ENCODE measurements at regions of chr1 and their contacts with region 1.

Region 1: DNA sequence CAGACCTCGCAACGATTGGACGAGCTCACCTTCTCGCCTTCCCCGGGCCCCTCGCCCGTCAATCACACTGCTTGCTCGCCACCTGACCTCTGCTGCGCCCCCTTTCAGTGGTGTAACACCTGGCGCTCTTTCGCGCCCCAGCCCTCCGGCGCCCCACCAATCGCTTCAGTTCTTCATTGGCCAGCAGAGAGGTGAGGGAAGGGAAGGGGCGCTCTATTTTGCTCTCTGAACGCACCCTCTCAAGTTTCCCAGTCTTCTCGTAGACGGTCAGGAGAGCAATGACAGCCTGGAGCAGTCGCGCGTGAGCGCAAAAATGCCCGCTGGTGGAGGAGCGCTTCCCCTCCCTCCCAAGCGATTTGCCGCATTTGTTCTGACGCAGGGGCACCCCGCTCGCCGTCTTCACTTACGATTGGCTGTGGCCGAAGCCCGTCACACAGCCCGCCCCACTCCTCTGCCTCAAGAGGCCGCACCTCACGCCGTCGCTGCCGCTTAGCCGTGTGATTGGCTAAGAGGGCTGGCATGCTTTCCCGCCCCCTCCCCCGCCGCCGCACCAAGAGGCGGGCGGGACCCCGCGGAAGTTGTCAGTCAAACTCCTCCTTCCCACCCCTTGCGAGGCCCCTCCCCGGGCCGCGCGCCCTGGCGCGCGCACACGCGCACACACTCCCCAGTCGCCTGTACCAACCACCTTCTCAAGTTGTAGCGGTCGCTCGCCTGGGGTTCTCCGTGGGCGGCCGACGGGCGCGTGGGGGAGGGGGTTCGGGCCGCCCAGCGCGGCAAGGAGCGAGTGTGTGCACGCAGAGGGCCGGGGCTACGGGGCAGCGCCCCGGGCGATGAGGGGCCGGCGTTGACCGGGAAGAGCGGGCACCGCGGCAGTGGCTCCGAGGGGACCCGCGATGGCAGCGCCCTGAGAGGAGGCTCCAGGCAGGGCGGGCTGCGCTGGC is at the start of gene PPP2R5A:
- DNase-seq: peak; percentile 99
- H3K4me3 Mint-ChIP-seq: peak within 1 kb of the TSS; percentile 96
- H3K27ac Mint-ChIP-seq: peak within 1 kb of the TSS; percentile 91
- H3K4me1 Mint-ChIP-seq: peaks cover 32% of the 10 kb centered on the region
- H3K27me3 Mint-ChIP-seq: no peaks in the 10 kb centered on the region
- total RNA-seq, gene PPP2R5A: 30.6 to 31.4 TPM

Region 2: GRCh38 chr1:211323156-211324063 is 961.6 kb before region 1 on chr1:
- CTCF ChIA-PET with region 1: no interaction called
- intact Hi-C with region 1: loop called (anchors 5 kb)
- DNase-seq: peak; percentile 85
- H3K4me3 Mint-ChIP-seq: no peak overlapping the region
- H3K27ac Mint-ChIP-seq: no peak overlapping the region
- H3K4me1 Mint-ChIP-seq: peaks cover 58% of the 10 kb centered on the region
- H3K27me3 Mint-ChIP-seq: no peaks in the 10 kb centered on the region

Region 3: DNA sequence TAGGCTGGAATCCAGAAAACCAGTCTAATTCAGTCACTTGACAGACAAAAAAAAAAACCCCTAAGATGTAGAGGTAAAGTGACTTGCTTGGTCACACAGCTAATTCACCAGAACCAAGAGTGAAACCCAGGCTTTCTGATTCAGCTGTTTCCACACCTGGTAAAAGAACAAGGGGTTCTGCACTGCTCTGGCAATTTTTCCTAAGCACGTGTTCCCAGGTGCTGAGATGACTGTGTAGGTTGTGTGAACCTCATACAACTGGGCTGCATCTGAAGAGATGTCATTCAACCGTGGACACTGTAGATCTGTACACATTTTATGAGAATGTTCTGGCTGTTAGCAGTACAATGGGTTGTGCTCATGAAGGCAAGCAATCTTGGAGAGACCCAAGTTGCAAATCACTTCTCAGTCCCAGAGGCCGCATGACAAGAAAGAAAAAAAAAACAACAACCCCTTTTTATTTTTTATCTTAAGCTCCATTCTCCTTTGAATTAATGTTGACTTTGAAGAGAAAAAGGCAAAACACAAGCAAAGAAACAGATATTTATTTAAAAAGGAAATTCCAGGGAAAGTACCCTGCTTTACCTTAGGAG is 345.0 kb before region 1 on chr1:
- CTCF ChIA-PET with region 1: no interaction called
- intact Hi-C with region 1: loop called (anchors 1 kb)
- DNase-seq: peak; percentile 86
- H3K4me3 Mint-ChIP-seq: no peak overlapping the region
- H3K27ac Mint-ChIP-seq: no peak overlapping the region
- H3K4me1 Mint-ChIP-seq: peaks cover 44% of the 10 kb centered on the region
- H3K27me3 Mint-ChIP-seq: no peaks in the 10 kb centered on the region

Region 4: DNA sequence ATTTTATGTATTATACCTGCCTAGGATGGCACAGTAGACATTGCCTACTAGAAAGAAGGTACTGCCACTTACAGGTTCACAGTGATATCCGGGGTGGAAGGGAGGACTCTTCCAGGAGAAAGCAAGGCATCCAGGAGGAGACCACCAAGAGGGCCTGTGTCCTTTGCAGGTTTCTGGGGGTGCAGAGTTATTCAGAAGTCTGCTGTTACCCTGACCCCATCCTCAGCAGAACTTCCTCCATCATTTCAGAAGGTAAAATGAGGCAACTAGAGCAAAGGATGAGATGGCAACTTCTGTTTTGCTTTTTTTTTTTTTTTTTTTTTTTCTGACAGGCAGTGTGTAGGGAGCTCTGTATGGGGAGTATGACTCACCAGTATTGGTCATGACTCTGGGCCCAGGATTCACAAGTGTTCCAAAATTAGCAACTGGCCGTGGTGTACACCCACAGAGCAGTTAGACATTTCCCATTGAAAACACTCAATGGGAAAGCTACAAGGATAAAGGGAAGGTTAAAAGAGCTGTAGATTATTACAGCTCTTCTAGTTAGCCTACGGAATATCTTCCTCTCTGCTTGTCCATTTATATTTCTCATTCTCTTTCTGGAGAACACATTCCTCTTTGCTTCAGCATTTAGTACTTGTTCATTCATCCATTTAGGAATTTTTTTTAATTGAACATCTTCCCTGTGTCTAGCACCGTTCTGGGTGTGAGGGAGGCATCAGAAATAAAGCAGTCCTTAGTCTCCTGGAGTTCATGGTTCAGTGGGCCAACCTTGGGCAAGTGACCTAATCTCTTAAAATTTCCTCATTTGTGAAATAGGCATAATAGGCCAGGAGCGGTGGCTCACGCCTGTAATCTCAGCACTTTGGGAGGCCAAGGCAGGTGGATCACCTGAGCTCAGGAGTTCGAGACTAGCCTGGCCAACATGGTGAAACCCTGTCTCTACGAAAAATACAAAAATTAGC is 50.3 kb before region 1 on chr1:
- CTCF ChIA-PET with region 1: no interaction called
- intact Hi-C with region 1: loop called (anchors 2 kb)
- DNase-seq: peak; percentile 60
- H3K4me3 Mint-ChIP-seq: no peak overlapping the region
- H3K27ac Mint-ChIP-seq: peak overlapping the region; percentile 19
- H3K4me1 Mint-ChIP-seq: peaks cover 14% of the 10 kb centered on the region
- H3K27me3 Mint-ChIP-seq: peaks cover 4% of the 10 kb centered on the region

Region 5: GRCh38 chr1:212414328-212415106 is 129.5 kb after region 1 on chr1 and contains the start of gene PACC1:
- CTCF ChIA-PET with region 1: no interaction called
- intact Hi-C with region 1: loop called (anchors 1 kb)
- DNase-seq: peak; percentile 88
- H3K4me3 Mint-ChIP-seq: peak within 1 kb of the TSS; percentile 95
- H3K27ac Mint-ChIP-seq: peak within 1 kb of the TSS; percentile 72
- H3K4me1 Mint-ChIP-seq: peaks cover 23% of the 10 kb centered on the region
- H3K27me3 Mint-ChIP-seq: no peaks in the 10 kb centered on the region
- total RNA-seq, gene PACC1: 9.5 to 10.2 TPM

Region 6: DNA sequence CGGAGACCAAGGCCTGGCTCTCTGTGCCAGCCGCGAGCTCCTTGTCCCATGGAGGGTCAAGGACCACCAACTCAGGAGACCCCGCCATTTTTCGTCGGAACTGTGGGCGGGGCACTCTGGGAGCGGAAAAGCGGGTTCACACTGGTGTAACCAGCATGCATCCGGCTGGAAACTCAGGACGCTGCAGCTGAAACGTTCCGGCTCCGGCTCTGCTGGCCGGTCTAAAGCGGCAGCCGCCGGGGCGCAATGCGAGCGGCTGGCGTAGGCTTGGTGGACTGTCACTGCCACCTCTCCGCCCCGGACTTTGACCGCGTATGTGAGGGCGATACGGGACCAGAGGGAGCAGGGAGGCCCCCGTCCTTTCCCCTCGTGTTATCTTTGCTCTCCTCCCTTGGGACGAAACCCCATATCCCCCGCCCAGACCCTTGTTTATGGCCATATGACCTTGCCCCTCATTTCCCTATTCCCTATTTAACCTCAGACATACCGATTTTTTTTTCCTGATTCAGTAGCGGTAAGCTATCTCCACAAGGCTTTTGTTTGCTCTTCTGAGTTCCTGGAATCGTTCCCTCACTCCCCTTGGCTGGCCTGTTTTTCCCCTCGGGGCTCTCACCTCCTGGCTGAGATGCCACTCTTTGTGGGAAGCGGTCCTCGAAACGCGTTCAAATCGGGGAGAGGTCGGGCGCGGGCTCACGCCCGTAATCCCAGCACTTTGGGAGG is 506.8 kb after region 1 on chr1 and contains the starts of genes NSL1 and TATDN3:
- CTCF ChIA-PET with region 1: no interaction called
- intact Hi-C with region 1: loop called (anchors 1 kb)
- DNase-seq: peak; percentile 94
- H3K4me3 Mint-ChIP-seq: peak within 1 kb of the TSS; percentile 99
- H3K27ac Mint-ChIP-seq: peak within 1 kb of the TSS; percentile 90
- H3K4me1 Mint-ChIP-seq: peaks cover 33% of the 10 kb centered on the region
- H3K27me3 Mint-ChIP-seq: no peaks in the 10 kb centered on the region
- total RNA-seq, gene NSL1: 21.2 to 23.7 TPM
- total RNA-seq, gene TATDN3: 14.9 to 16.9 TPM

Region 7: DNA sequence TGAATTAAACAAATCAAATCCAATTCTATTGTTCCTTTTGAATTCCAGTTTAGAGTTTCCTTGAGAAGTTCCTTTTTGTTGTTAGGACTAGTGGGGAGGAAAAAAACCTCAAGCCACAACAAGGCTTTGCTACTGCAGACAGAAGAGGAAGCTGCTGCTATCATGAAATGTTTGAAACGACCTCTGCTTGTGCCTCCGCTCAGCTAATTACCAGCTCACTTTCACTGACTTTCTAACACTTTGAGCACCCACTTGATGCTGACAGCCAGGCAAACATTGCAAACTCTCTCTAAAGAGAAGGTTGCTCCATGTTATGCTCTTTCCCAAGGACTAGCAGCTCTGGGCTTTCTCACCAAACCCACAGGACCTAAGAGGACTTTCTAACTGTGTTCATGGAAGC is 1498.9 kb after region 1 on chr1:
- CTCF ChIA-PET with region 1: no interaction called
- intact Hi-C with region 1: no loop called
- DNase-seq: peak; percentile 13
- H3K4me3 Mint-ChIP-seq: no peak overlapping the region
- H3K27ac Mint-ChIP-seq: no peak overlapping the region
- H3K4me1 Mint-ChIP-seq: peaks cover 21% of the 10 kb centered on the region
- H3K27me3 Mint-ChIP-seq: peaks cover 3% of the 10 kb centered on the region